ENCODE measurements at regions of chr17 and their contacts with region 1.

Region 1: DNA sequence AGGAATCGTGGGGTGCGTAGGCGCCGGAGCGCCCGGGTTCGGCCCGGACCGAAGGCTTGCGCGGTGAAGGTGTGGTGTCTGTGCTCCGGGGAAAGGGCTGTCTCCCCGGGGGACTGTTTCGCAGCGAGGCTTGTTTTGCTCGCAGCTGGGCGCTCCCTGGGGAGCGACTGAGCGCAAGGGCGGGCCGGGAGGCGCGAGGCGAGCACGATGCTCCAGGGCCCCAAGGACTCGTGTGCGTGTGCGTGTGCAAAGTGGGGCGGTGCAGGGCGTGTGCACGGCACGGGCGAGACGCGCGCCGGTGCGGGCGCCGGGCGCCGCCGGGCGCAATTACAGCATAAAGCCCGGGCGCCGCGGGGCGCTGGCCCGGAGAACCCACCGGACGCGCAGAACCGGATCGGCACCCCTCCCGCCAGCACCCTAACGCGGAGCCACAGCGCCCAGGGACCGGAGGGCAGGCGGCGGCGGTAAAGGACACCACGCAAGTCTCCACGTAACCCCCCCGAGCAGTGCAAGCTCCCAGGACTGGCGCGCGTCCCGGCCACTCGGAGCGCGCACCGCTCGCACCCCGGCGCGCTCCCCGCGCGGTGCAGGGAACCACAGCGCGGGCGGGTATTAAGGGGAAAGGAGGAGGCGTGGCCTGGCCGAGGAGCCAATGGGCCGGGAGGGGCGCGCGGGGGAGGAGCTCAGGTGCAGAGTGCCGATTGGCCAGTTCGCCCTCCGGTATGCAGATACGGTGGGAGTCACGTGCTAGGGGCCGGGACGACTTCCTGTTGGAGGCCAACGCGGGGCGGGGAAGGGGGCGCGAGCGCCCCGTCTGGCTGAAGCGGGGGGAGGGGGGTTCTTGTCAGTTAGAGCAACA is at the start of gene TNRC6C:
- DNase-seq: peak; percentile 100
- ATAC-seq: peak; percentile 93 to 98
- H3K4me3 ChIP-seq: peak within 1 kb of the TSS; percentile 81
- H3K27ac ChIP-seq: peak within 1 kb of the TSS; percentile 74 to 91
- H3K4me1 ChIP-seq: peaks cover 5% of the 10 kb centered on the region; the same call in 2 of the 3 replicates
- CTCF ChIP-seq: 0 out of 3 replicates have a peak, but pooled peaks have one; percentile 12
- EP300 ChIP-seq: no peak
- POLR2A ChIP-seq: peak; percentile 100
- RAD21 ChIP-seq: no peak; a peak in 1 of 5 replicates
- polyA plus RNA-seq, gene TNRC6C: 1.3 and 3.4 TPM in 2 replicates

Region 2: DNA sequence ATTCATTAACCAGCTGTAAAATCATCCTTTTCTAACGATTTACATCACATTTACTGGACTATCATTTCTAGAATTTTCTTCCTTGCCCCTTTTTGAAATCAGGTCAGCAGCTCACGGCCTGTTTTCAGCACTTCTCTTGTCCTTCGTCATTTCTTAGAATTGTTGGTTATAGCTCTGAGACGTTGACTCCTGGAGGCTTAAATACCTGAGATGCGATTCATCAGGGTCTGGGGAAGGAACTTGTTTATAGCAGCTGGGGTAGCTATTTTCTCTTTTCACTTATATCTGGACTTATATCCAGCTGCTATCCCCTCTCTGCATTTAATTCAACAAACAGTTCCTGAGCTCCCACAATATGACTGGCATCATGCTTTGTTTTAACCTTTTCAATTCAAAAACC is 338.2 kb before region 1 on chr17:
- CTCF ChIA-PET with region 1: no interaction called
- POLR2A ChIA-PET with region 1: interaction called, 11 read pairs
- DNase-seq: peak in 1 of 2 experiments; percentile 45
- ATAC-seq: no peak
- H3K4me3 ChIP-seq: no peak overlapping the region
- H3K27ac ChIP-seq: peak overlapping the region; percentile 84 to 95
- H3K4me1 ChIP-seq: peaks cover 51% of the 10 kb centered on the region
- CTCF ChIP-seq: no peak
- EP300 ChIP-seq: no peak
- POLR2A ChIP-seq: no peak
- RAD21 ChIP-seq: no peak

Region 3: DNA sequence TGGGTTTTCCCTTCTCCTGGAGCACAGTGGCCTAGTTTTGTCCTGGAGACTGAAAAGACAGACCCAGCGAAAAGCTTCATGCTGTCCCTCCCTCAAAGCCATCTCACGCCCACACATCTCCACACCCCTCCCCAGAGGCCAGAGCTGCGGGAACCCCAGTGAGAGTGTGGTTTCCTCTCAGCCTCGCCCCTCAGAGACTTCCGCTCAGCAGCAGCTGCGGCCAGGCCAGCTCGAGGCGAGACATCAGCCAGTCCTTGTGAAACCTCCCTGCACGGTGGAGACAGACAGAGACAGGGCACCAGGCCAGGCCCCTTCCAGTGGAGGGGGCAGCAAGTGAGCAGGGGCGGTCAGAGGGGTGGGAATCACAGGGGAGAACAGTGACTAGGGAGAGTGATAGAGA is 76.5 kb before region 1 on chr17:
- CTCF ChIA-PET with region 1: no interaction called
- POLR2A ChIA-PET with region 1: interaction called, 48 read pairs
- DNase-seq: no peak
- ATAC-seq: peak in 1 of 2 experiments; percentile 11; a peak in 1 of 6 replicates
- H3K4me3 ChIP-seq: no peak overlapping the region
- H3K27ac ChIP-seq: no peak overlapping the region
- H3K4me1 ChIP-seq: peaks cover 7% of the 10 kb centered on the region; the same call in 2 of the 3 replicates
- CTCF ChIP-seq: no peak
- EP300 ChIP-seq: no peak
- POLR2A ChIP-seq: no peak
- RAD21 ChIP-seq: no peak

Region 4: GRCh38 chr17:77914385-77915254 is 43.5 kb before region 1 on chr17:
- CTCF ChIA-PET with region 1: interaction called, 4 read pairs
- POLR2A ChIA-PET with region 1: interaction called, 32 read pairs
- DNase-seq: peak in 1 of 2 experiments; percentile 40
- ATAC-seq: peak; percentile 75 to 85
- H3K4me3 ChIP-seq: no peak overlapping the region
- H3K27ac ChIP-seq: no peak overlapping the region
- H3K4me1 ChIP-seq: peaks cover 8% of the 10 kb centered on the region; the same call in 1 of the 3 replicates
- CTCF ChIP-seq: 0 out of 3 replicates have a peak, but pooled peaks have one; percentile 21
- EP300 ChIP-seq: no peak
- POLR2A ChIP-seq: no peak
- RAD21 ChIP-seq: peak; percentile 26 to 42; a peak in 2 of 5 replicates

Region 5: DNA sequence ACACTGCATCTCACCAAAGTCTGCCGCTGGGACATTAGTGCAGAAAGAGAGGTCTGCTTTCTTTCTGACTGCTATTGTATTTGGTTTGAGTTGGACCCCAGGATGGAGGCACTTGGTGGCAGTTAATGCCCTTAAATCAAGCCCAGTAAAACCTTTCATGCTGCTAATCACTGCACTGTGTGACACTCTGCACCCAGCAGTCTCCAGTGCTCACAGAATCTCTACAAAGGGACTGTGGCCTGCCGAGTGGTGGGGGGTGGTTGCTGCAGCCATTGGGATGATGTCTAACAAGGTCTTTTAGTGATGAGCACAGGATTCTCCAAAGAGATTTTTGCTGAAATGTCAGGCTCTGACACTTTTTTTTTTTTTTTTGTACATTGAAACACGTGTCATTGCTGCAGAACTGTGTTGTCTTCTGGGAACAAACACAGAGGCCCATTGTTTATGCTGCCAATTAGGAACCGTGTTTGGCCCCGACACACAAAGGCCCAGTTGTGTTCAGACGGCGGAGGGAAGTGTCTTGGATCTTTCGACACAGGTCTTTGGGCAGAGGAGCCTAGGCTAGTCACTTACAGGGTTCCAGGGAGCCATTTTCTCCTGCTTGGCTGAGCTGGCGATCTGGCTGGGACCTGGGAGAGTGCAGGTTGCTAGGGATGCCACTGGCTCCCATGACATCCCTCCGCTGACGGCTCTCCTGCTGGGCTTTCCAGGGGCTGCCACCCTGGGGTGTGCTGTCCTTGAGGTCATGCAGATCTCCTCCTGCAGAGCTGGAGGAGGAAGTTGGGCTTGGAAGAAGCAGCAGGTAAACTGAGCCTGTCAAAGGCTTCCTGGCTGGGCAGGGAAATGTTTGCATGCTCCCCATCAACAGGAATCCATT is 15.7 kb before region 1 on chr17:
- CTCF ChIA-PET with region 1: interaction called, 10 read pairs
- POLR2A ChIA-PET with region 1: interaction called, 37 read pairs
- DNase-seq: no peak
- ATAC-seq: no peak; a peak in 1 of 6 replicates
- H3K4me3 ChIP-seq: no peak overlapping the region
- H3K27ac ChIP-seq: no peak overlapping the region
- H3K4me1 ChIP-seq: no peaks in the 10 kb centered on the region
- CTCF ChIP-seq: no peak
- EP300 ChIP-seq: no peak
- POLR2A ChIP-seq: no peak
- RAD21 ChIP-seq: no peak

Region 6: DNA sequence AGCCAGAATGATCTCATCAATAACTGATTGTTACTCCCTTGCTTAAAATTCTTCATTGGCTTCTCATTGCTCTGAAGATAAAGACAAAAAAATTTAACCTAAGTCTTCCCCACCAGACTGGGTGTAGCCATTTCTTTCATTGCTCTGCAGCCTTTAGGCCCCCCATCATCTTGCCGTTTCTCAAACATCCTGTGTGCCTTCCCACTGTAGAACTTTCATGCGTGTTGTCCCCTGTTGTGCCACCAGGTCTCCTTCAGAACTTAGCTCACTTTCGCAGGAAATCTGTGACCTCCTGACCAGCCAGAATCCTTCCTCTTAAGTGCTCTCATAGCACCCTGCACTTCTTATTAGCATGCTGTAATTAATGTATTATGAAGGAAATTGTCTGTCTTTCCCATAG is 32.2 kb after region 1 on chr17:
- CTCF ChIA-PET with region 1: interaction called, 3 read pairs
- POLR2A ChIA-PET with region 1: interaction called, 22 read pairs
- DNase-seq: no peak
- ATAC-seq: no peak
- H3K4me3 ChIP-seq: no peak overlapping the region
- H3K27ac ChIP-seq: no peak overlapping the region
- H3K4me1 ChIP-seq: no peaks in the 10 kb centered on the region
- CTCF ChIP-seq: no peak
- EP300 ChIP-seq: no peak
- POLR2A ChIP-seq: no peak
- RAD21 ChIP-seq: no peak

Region 7: DNA sequence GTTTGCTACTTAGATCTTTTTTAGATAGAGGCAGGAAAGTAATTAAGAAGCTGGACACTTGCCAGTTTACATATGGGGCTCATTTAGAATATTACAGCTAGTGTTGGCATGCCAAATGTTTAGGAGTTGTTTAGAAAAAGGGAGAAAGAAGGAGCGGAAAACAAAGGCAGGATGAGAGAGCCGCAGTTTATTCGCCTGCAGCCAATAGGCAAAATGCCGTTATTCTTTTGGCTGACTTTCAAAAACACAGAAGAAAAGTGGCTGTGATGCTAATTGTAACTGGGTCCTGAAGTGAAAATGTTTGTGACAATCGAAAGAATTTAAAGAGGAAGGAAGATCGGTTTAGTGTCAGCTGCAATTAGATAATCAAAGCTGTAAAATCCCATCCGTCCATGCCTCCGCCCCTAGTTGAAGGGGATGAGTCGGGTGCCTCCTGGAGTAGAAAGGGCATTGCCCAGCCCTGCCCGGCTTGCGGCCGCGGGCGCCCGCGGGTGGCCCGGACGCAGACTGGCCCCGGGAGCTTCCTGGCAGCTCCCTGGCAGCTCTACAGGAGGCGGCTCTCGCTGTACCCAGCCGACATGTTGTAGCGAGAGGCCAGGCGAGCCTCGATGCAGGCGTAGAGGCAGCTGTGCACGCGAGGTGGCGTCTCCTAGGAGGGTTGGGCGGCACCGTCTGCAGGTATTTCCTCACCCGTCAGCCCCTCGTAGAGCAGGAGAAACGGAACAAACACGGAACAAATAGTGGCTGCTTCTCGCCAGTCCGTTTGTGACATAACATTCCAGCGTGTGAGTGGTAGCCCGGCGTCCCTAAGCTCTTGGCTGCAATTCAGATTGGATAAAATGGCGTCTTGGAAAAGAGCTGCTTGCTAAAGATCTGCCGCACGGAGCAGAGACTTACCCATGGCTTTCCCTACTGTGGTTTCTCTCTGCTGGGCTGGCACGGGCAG is 82.6 kb after region 1 on chr17:
- CTCF ChIA-PET with region 1: no interaction called
- POLR2A ChIA-PET with region 1: interaction called, 19 read pairs
- DNase-seq: peak; percentile 66 to 81
- ATAC-seq: peak; percentile 97 to 98
- H3K4me3 ChIP-seq: peak overlapping the region; percentile 47
- H3K27ac ChIP-seq: peak overlapping the region; percentile 77 to 89
- H3K4me1 ChIP-seq: peaks cover 11% of the 10 kb centered on the region; the same call in 2 of the 3 replicates
- CTCF ChIP-seq: no peak
- EP300 ChIP-seq: no peak
- POLR2A ChIP-seq: peak; percentile 88
- RAD21 ChIP-seq: no peak

Region 8: DNA sequence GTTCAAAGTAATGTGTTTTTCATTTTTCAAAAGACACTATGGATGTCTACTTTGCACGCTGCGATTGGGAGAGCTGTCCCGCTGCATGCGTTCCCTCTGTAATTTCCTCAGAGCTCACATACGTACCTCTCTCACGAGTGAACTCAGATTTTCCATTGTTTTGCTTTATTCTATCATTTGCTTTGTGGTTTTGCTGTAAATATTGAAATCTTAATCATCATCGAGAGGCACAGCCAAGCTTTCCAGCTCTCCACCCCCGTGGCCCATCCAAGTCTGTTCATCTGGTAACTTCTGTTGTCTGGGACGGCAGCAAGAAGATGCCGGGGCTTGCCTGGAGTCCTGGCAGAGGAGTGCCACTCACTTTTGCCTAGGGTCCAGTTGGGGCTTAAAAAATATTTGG is 149.4 kb after region 1 on chr17:
- CTCF ChIA-PET with region 1: no interaction called
- POLR2A ChIA-PET with region 1: no interaction called
- DNase-seq: no peak
- ATAC-seq: no peak
- H3K4me3 ChIP-seq: no peak overlapping the region
- H3K27ac ChIP-seq: no peak overlapping the region
- H3K4me1 ChIP-seq: no peaks in the 10 kb centered on the region
- CTCF ChIP-seq: no peak
- EP300 ChIP-seq: no peak
- POLR2A ChIP-seq: no peak
- RAD21 ChIP-seq: no peak

Measured in A549 (cell line).